Activated CD8-positive, alpha-beta T cell treated with anti-CD3 and anti-CD28 coated beads for 36 hours (primary cell): ENCODE measurements at regions of chr6 and their contacts with region 1.

Region 1: GRCh38 chr6:31493875-31494694 is 3.9 kb upstream of the MICB start:
- DNase-seq: peak; percentile 91
- ATAC-seq: peak; percentile 50
- H3K4me3 Mint-ChIP-seq: peak overlapping the region; percentile 89
- H3K27ac Mint-ChIP-seq: peak overlapping the region; percentile 92
- H3K4me1 Mint-ChIP-seq: peaks cover 36% of the 10 kb centered on the region
- H3K27me3 Mint-ChIP-seq: no peaks in the 10 kb centered on the region
- CTCF ChIP-seq: peak; percentile 91

Region 2: GRCh38 chr6:31403283-31403989 is 90.6 kb before region 1 on chr6 and contains the start of gene MICA:
- CTCF ChIA-PET with region 1: interaction called, 13 read pairs
- POLR2A ChIA-PET with region 1: interaction called, 8 read pairs
- intact Hi-C with region 1: no loop called
- DNase-seq: peak; percentile 77
- ATAC-seq: peak; percentile 68
- H3K4me3 Mint-ChIP-seq: peak within 1 kb of the TSS; percentile 81
- H3K27ac Mint-ChIP-seq: peak within 1 kb of the TSS; percentile 71
- H3K4me1 Mint-ChIP-seq: peaks cover 57% of the 10 kb centered on the region
- H3K27me3 Mint-ChIP-seq: no peaks in the 10 kb centered on the region
- CTCF ChIP-seq: no peak
- total RNA-seq, gene MICA: 5.6 to 6.0 TPM

Region 3: GRCh38 chr6:31450751-31451150 is 43.3 kb before region 1 on chr6:
- CTCF ChIA-PET with region 1: no interaction called
- POLR2A ChIA-PET with region 1: no interaction called
- intact Hi-C with region 1: no loop called
- DNase-seq: no peak
- ATAC-seq: no peak
- H3K4me3 Mint-ChIP-seq: no peak overlapping the region
- H3K27ac Mint-ChIP-seq: no peak overlapping the region
- H3K4me1 Mint-ChIP-seq: no peaks in the 10 kb centered on the region
- H3K27me3 Mint-ChIP-seq: peaks cover 11% of the 10 kb centered on the region
- CTCF ChIP-seq: no peak

Region 4: GRCh38 chr6:31479933-31480535 is 14.1 kb before region 1 on chr6:
- CTCF ChIA-PET with region 1: interaction called, 11 read pairs
- POLR2A ChIA-PET with region 1: interaction called, 4 read pairs
- intact Hi-C with region 1: no loop called
- DNase-seq: no peak
- ATAC-seq: no peak
- H3K4me3 Mint-ChIP-seq: no peak overlapping the region
- H3K27ac Mint-ChIP-seq: no peak overlapping the region
- H3K4me1 Mint-ChIP-seq: peaks cover 8% of the 10 kb centered on the region
- H3K27me3 Mint-ChIP-seq: no peaks in the 10 kb centered on the region
- CTCF ChIP-seq: no peak

Region 5: GRCh38 chr6:31535538-31536324 is 41.6 kb after region 1 on chr6:
- CTCF ChIA-PET with region 1: interaction called, 26 read pairs
- POLR2A ChIA-PET with region 1: interaction called, 35 read pairs
- intact Hi-C with region 1: loop called (anchors 2 kb)
- DNase-seq: no peak
- ATAC-seq: no peak
- H3K4me3 Mint-ChIP-seq: no peak overlapping the region
- H3K27ac Mint-ChIP-seq: peak overlapping the region; percentile 14
- H3K4me1 Mint-ChIP-seq: peaks cover 58% of the 10 kb centered on the region
- H3K27me3 Mint-ChIP-seq: no peaks in the 10 kb centered on the region
- CTCF ChIP-seq: no peak

Region 6: DNA sequence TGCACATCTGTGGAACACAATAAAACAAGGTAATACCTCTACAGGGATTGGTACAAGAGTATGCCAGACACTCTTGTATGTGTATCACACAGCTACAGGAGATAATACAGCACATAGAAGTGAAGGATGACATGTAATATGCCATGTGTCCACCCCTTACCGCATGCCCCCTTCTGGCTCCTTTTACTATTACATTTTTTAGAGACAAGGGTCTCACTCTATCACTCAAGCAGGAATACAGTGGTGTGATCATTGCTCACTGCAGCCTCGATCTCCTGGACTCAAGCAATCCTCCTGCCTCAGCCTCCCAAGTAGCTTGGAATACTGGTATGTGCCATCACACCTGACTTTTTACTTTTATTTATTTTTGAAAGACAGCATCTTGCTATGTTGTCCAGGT is 102.9 kb after region 1 on chr6:
- CTCF ChIA-PET with region 1: interaction called, 42 read pairs
- POLR2A ChIA-PET with region 1: interaction called, 9 read pairs
- intact Hi-C with region 1: no loop called
- DNase-seq: peak; percentile 71
- ATAC-seq: peak; percentile 68
- H3K4me3 Mint-ChIP-seq: no peak overlapping the region
- H3K27ac Mint-ChIP-seq: peak overlapping the region; percentile 37
- H3K4me1 Mint-ChIP-seq: peaks cover 43% of the 10 kb centered on the region
- H3K27me3 Mint-ChIP-seq: no peaks in the 10 kb centered on the region
- CTCF ChIP-seq: peak; percentile 80

Region 7: DNA sequence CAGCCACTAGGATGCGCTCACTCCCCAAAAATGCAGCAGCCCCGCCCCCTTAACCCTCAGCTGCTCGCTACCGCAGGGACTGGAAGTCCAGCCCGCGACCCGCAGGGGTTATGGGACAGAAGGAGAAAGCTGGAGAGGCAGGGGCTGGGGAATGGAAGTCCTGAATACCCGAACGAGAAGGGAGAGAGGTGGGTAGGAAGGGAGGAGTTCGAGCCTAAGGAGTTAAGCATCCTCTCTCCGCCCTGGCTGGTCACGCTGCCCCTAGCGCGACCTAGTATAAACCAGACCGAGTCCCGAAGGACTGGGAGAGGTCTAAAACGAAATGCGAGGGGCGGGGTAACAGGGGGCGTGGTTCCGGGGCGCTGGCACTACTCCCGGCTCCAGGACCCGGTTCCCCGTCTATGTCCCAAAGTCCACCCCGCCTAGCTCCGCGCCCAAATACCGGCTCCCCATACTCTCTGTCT is 235.5 kb after region 1 on chr6:
- CTCF ChIA-PET with region 1: no interaction called
- POLR2A ChIA-PET with region 1: no interaction called
- intact Hi-C with region 1: no loop called
- DNase-seq: peak; percentile 84
- ATAC-seq: peak; percentile 65
- H3K4me3 Mint-ChIP-seq: peak overlapping the region; percentile 76
- H3K27ac Mint-ChIP-seq: peak overlapping the region; percentile 69
- H3K4me1 Mint-ChIP-seq: peaks cover 68% of the 10 kb centered on the region
- H3K27me3 Mint-ChIP-seq: no peaks in the 10 kb centered on the region
- CTCF ChIP-seq: peak; percentile 25